IMR-90 (cell line): ENCODE measurements at regions of chr1 and their contacts with region 1.

Region 1: GRCh38 chr1:161117759-161118581 is at the starts of genes NIT1 and PFDN2:
- DNase-seq: peak; percentile 85
- ATAC-seq: peak; percentile 87
- H3K4me3 ChIP-seq: peak within 1 kb of the TSS; percentile 87
- H3K27ac ChIP-seq: peak within 1 kb of the TSS; percentile 82
- H3K4me1 ChIP-seq: peaks cover 16% of the 10 kb centered on the region
- H3K27me3 ChIP-seq: no peaks in the 10 kb centered on the region
- CTCF ChIP-seq: no peak
- POLR2A ChIP-seq: peak; percentile 94
- RAD21 ChIP-seq: 0 out of 2 replicates have a peak, but pooled peaks have one; percentile 2
- total RNA-seq, gene NIT1: 22.8 TPM in 2 replicates
- total RNA-seq, gene PFDN2: 62.4 and 166 TPM in 2 replicates

Region 2: GRCh38 chr1:161132410-161133219 is 14.6 kb after region 1 on chr1 and contains the start of gene DEDD:
- CTCF ChIA-PET with region 1: no interaction called
- POLR2A ChIA-PET with region 1: interaction called, 9 read pairs
- dilution Hi-C with region 1: no loop called
- in situ Hi-C with region 1: no loop called
- intact Hi-C with region 1: loop called (anchors 1 kb)
- DNase-seq: peak; percentile 96
- ATAC-seq: peak; percentile 91
- H3K4me3 ChIP-seq: peak within 1 kb of the TSS; percentile 72
- H3K27ac ChIP-seq: peak within 1 kb of the TSS; percentile 90
- H3K4me1 ChIP-seq: no peaks in the 10 kb centered on the region; the same call in 1 of the 2 replicates
- H3K27me3 ChIP-seq: no peaks in the 10 kb centered on the region
- CTCF ChIP-seq: no peak; the same call in 1 of the 2 replicates
- POLR2A ChIP-seq: no peak
- RAD21 ChIP-seq: no peak
- total RNA-seq, gene DEDD: 35.3 and 47.9 TPM in 2 replicates